Naive thymus-derived CD8-positive, alpha-beta T cell (primary cell): ENCODE measurements at regions of chr22 and their contacts with region 1.

Region 1: GRCh38 chr22:17095538-17095937 is 10.7 kb downstream of the IL17RA start:
- DNase-seq: peak in 1 of 10 donors; percentile 23
- ATAC-seq: no peak
- H3K4me3 Mint-ChIP-seq: peak overlapping the region in 4 of 10 donors; percentile 33 to 50 (median 36)
- H3K27ac Mint-ChIP-seq: peak overlapping the region in 6 of 10 donors; percentile 23 to 83 (median 66)
- H3K4me1 Mint-ChIP-seq: peaks cover 46 to 97% (median 92%) of the 10 kb centered on the region in 4 donors
- H3K27me3 Mint-ChIP-seq: no peaks in the 10 kb centered on the region

Region 2: DNA sequence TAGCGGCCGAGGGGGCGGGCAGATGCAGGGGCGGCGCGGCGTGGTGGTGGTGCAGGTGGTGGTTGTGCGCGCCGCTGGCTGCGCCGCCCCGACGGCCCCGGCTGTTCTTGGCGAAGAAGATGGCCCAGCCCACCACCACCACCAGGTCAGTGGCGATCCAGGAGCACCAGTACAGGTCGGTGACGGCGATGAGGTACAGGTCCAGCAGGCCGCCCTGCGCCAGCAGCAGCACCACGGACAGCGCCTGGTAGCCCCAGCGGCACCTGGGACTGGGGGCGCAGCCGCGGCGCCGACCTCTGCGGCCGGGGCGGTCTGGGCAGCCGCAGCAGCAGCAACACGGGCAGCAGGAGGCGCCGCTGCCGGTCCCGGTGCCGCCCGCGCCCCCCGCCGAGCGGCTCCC is 24.7 kb after region 1 on chr22:
- POLR2A ChIA-PET with region 1: interaction called, 16 read pairs
- DNase-seq: peak; percentile 27 to 77 (median 58)
- ATAC-seq: peak; percentile 59 to 76
- H3K4me3 Mint-ChIP-seq: peak overlapping the region in 6 of 10 donors; percentile 25 to 80 (median 47)
- H3K27ac Mint-ChIP-seq: no peak overlapping the region
- H3K4me1 Mint-ChIP-seq: peaks cover 32 to 51% (median 47%) of the 10 kb centered on the region in 4 donors
- H3K27me3 Mint-ChIP-seq: peaks cover 6 to 20% (median 8%) of the 10 kb centered on the region in 5 donors

Region 3: DNA sequence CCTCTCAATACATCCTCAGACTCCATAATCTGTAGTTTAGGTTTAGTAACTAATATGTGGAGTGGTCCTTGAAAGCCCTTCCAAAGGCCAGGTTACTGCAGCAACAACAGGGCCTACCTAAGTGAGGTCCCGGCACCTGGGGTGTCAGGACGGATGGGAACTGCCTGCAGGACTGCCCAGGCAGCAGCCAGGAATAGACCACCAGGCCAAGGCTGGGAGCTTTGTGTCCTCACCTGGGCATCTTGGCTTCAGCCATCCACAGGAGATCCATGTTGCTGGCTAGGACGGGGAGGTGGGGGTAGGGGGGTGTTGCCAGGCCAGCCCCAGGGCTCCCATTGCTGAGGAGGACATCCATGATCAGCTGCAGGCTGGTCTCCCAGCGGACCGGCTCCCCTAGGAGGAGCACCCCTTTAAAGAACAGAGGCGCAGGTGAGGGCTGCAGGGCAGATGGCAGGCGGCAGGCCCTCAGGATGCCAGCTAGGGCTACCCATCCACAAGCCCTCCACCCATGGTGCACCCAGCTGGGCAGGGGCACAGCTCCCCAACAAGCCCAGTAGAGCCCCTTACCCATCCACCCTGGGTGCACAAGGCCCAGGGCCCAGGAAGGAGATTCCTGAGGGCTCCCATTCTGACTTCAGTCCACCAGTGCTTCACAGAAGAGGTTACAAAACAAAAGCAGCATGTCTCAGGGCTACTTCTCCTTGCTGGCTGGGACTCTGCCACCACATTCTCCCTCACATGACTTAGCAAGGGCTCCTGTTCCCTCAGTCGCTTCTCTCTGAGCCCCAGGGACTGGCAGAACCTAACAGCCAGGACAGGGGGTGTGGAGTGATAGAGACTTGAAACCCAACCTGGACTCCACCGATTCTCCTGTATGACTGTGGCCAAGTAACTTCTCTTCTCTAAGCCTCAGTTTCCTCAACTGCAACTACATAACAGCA is 45.6 kb after region 1 on chr22:
- POLR2A ChIA-PET with region 1: no interaction called
- DNase-seq: no peak
- ATAC-seq: no peak
- H3K4me3 Mint-ChIP-seq: no peak overlapping the region
- H3K27ac Mint-ChIP-seq: peak overlapping the region in 2 of 10 donors; percentile 16 to 53
- H3K4me1 Mint-ChIP-seq: peaks cover 0 to 7% (median under 1%) of the 10 kb centered on the region in 4 donors
- H3K27me3 Mint-ChIP-seq: no peaks in the 10 kb centered on the region

Region 4: GRCh38 chr22:17199003-17199731 is 103.6 kb after region 1 on chr22:
- POLR2A ChIA-PET with region 1: no interaction called
- DNase-seq: no peak
- ATAC-seq: no peak
- H3K4me3 Mint-ChIP-seq: no peak overlapping the region
- H3K27ac Mint-ChIP-seq: peak overlapping the region in 5 of 10 donors; percentile 27 to 82 (median 34)
- H3K4me1 Mint-ChIP-seq: peaks cover 3 to 31% (median 25%) of the 10 kb centered on the region in 4 donors
- H3K27me3 Mint-ChIP-seq: no peaks in the 10 kb centered on the region